ENCODE measurements at regions of chr9 and their contacts with region 1.

Region 1: DNA sequence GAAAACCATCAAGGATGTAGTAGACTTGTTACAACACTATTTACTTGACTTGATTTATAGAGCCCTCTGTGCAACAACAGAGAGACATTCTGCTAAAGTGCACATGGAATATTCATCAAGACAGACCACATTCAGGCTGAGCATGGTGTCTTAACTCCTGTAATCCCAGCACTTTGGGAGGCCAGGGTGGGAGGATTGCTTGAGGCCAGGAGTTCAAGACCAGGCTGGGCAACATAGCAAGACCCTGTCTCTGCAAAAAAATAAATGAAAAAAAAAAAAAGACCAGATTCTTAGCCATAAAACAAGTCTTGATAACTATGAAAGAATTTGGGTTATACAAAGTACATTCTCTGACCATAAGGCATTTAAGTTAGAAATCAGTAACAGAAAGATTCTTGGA is 25.3 kb downstream of the DENND4C start:
- DNase-seq: no peak
- H3K27ac ChIP-seq: no peak overlapping the region
- CTCF ChIP-seq: no peak

Region 2: DNA sequence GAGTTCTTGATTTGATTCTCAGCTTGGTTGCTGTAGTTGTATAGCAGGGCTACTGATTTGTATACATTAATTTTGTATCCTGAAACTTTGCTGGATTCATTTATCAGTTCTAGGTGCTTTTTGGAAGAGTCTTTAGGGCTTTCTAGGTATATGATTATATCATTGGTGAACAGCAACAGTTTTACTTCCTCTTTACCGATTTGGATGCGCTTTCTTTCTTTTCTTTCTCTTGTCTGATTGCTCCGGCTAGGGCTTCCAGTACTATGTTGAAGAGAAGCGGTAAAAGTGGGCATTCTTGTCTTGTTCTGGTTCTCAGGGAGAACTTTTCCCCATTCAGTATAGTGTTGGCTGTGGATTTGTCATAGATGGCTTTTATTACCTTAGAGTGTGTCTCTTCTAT is 381.8 kb before region 1 on chr9:
- CTCF ChIA-PET with region 1: no interaction called
- POLR2A ChIA-PET with region 1: no interaction called
- DNase-seq: no peak
- H3K27ac ChIP-seq: no peak overlapping the region
- CTCF ChIP-seq: no peak

Region 3: DNA sequence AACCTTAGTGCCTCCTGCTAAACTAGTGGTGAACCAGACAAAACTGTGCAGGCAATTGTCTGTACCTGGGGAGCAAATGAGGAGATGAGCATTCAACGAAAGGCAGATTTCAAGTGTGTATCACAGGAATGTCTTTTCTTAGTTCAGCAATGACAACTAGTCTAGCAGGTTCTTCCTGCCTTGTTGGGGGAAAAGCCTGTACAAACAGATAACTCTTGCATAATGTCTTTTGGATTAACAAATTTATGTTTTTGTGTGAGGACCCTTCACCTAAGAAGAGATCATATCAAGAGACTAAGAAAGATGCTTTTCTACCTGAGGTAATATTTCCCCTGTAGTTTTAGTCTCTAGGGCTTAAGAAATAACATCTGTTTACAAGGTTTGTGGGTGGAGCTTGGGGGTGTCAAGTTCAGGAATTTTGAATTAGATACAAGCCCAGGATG is 47.1 kb before region 1 on chr9:
- CTCF ChIA-PET with region 1: no interaction called
- POLR2A ChIA-PET with region 1: interaction called, 12 read pairs
- DNase-seq: peak; percentile 41
- H3K27ac ChIP-seq: no peak overlapping the region
- CTCF ChIP-seq: no peak

Region 4: GRCh38 chr9:19230356-19231125 is 25.3 kb before region 1 on chr9 and contains the start of gene DENND4C:
- CTCF ChIA-PET with region 1: no interaction called
- POLR2A ChIA-PET with region 1: no interaction called
- DNase-seq: peak; percentile 81
- H3K27ac ChIP-seq: peak within 1 kb of the TSS; percentile 96
- CTCF ChIP-seq: peak; percentile 32

Measured in RWPE1 (cell line).